ENCODE measurements at regions of chr19 and their contacts with region 1.

Region 1: DNA sequence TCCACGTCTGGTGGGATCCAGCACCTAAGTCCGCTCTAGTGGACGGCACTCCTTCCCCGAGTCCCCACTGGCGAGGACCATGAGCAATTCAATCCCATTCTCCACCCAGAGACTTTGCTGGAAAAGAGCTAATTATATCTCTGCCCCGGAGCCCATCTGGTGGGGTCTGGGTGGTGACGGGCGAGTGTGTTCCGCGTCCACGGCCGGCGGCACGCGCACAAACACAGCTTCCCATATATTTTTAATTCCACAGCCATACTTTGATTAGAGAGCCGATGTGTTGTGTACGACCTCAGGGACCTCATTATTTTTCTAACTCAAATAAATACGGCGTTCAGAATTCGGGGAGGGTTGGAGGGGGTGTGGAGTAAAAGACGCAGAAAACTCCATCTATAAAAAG is 64.1 kb upstream of the ADGRE5 start:
- DNase-seq: no peak
- H3K4me3 Mint-ChIP-seq: no peak overlapping the region
- H3K27ac Mint-ChIP-seq: no peak overlapping the region
- H3K4me1 Mint-ChIP-seq: no peaks in the 10 kb centered on the region
- H3K27me3 Mint-ChIP-seq: peaks cover 35% of the 10 kb centered on the region
- CTCF ChIP-seq: no peak

Region 2: DNA sequence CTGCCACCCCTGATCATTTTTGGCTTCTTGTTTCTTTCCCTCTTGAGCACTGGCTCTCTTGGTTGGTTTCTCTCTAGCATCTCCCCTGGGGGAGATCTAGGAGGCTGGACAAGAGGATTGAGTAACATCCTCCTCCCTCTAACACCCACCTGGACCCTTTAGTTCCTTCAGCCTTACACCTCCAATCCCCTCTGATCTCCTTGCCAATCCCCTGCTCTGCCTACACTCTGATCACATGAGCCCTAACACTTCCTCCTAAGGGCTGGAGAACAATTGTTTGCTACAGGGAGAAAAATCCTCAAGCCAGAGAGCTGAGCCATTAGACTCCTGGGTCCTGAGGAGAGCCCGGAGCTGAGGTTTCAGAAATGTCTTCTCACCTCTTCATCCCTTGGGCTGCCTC is 45.3 kb before region 1 on chr19:
- CTCF ChIA-PET with region 1: no interaction called
- intact Hi-C with region 1: no loop called
- DNase-seq: no peak
- H3K4me3 Mint-ChIP-seq: no peak overlapping the region
- H3K27ac Mint-ChIP-seq: no peak overlapping the region
- H3K4me1 Mint-ChIP-seq: no peaks in the 10 kb centered on the region
- H3K27me3 Mint-ChIP-seq: peaks cover 64% of the 10 kb centered on the region
- CTCF ChIP-seq: no peak

Region 3: DNA sequence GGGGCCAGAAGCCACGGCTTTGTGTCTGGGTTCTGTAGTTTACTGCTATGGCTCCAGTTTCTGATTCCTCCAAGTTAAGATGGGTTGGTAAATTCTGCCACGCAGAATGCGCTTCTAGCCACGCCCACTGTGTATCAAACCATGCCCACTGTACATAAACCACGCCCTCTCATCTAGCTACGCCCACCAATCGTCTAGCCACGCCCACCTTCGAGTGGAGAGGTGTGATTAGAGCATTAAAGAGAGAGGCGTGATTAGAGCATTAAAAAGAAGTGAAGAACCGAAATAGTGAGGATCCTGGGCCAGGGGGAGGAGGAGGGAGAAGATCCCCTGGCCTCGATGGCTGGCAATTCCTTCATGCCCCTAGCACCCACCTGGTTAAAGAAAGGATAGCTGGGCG is 20.4 kb after region 1 on chr19:
- CTCF ChIA-PET with region 1: interaction called, 13 read pairs
- intact Hi-C with region 1: no loop called
- DNase-seq: no peak
- H3K4me3 Mint-ChIP-seq: no peak overlapping the region
- H3K27ac Mint-ChIP-seq: no peak overlapping the region
- H3K4me1 Mint-ChIP-seq: no peaks in the 10 kb centered on the region
- H3K27me3 Mint-ChIP-seq: no peaks in the 10 kb centered on the region
- CTCF ChIP-seq: no peak